Heart left ventricle (tissue), 16 donors: ENCODE measurements at regions of chr1 and their contacts with region 1.

Region 1: GRCh38 chr1:222892137-222892769 is 77.4 kb downstream of the DISP1 start:
- DNase-seq: no peak
- ATAC-seq: peak in 3 of 4 donors; percentile 45 to 68 (median 56)
- H3K4me3 ChIP-seq: no peak overlapping the region
- H3K27ac ChIP-seq: peak overlapping the region in 4 of 12 donors; percentile 2 to 66 (median 35)
- H3K4me1 ChIP-seq: peaks cover 0 to 28% (median 10%) of the 10 kb centered on the region in 12 donors
- H3K27me3 ChIP-seq: no peaks in the 10 kb centered on the region
- CTCF ChIP-seq: no peak
- POLR2A ChIP-seq: no peak

Region 2: GRCh38 chr1:222691016-222691415 is 201.2 kb before region 1 on chr1:
- intact Hi-C with region 1: no loop called
- DNase-seq: no peak
- ATAC-seq: no peak
- H3K4me3 ChIP-seq: no peak overlapping the region
- H3K27ac ChIP-seq: no peak overlapping the region
- H3K4me1 ChIP-seq: peaks cover 0 to 6% (median 0%) of the 10 kb centered on the region in 12 donors
- H3K27me3 ChIP-seq: no peaks in the 10 kb centered on the region
- CTCF ChIP-seq: no peak
- POLR2A ChIP-seq: no peak

Region 3: DNA sequence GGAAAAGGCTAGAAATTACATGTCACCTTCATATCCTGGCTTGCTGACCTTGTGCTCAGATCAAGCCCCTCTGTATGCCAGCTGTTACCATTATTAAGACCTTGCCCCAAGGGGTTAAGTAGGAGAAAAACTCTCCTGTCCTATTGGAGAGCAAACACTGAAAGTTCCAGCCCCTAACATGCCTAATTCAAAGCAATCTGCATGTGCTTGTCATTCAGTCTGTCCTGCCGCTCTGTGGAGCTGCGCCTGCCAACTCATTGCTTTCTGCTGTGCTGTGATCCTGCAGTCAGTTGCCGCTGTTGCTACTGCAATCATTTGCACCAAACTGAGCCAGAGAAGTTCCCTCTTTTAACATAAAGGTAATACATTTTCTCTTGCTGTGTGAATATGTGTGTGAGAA is 36.0 kb after region 1 on chr1:
- intact Hi-C with region 1: loop called in 1 of 10 experiments (anchors 5 kb)
- DNase-seq: peak; percentile 68 to 78 (median 69)
- ATAC-seq: peak; percentile 93 to 99 (median 98)
- H3K4me3 ChIP-seq: peak overlapping the region; percentile 1 to 63 (median 45)
- H3K27ac ChIP-seq: peak overlapping the region in 11 of 12 donors; percentile 5 to 62 (median 27)
- H3K4me1 ChIP-seq: peaks cover 0 to 48% (median 29%) of the 10 kb centered on the region in 12 donors
- H3K27me3 ChIP-seq: no peaks in the 10 kb centered on the region
- CTCF ChIP-seq: peak in 4 of 12 donors; percentile 22 to 41 (median 30)
- POLR2A ChIP-seq: peak in 1 of 2 donors; percentile 58